ENCODE measurements at regions of chr13 and their contacts with region 1.

Region 1: GRCh38 chr13:98576963-98577822 is at the start of gene STK24:
- DNase-seq: peak; percentile 89
- ATAC-seq: peak; percentile 78
- total RNA-seq, gene STK24: 71.7 TPM

Region 2: GRCh38 chr13:98476538-98476966 is 100.6 kb before region 1 on chr13:
- intact Hi-C with region 1: loop called (anchors 10 kb)
- DNase-seq: peak; percentile 53
- ATAC-seq: peak; percentile 13

Region 3: GRCh38 chr13:98751861-98752466 is 174.8 kb after region 1 on chr13:
- intact Hi-C with region 1: no loop called
- DNase-seq: no peak
- ATAC-seq: no peak